ENCODE measurements at regions of chr16 and their contacts with region 1.

Region 1: DNA sequence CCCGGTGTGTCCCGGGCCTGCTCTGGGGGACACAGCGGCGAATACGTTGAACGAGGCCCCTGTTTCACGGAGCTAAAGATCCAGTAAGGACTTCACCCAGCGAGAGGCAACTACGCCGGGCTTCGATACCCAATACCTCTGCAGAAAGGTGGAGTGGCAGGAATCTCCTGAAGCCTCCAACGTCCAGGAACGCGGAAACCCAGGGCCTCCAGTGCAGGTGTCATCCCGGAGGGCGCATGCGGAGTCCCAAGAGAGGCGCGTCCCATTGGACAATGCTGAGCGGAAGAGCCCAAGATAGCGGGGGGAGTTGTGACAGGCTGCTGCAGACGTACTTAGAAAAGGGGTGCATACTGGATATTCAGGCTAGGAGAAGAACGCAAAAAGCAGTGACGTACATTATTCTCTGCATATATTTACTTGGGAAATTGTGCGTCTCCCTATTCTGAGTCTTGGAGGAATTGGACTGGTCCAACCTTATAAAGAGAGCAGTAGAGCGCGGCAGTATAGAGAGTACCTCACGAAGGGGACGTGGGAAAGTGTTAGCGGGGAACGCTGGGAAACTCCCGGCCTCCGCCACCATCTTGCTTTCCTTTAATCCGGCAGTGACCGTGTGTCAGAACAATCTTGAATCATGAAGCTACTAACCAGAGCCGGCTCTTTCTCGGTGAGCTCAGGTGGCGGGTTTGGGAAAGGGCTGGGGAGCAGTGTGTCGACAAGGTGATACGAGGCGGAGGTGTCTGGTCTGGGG is at the start of gene UQCRC2:
- DNase-seq: peak; percentile 95
- H3K4me3 ChIP-seq: peak within 1 kb of the TSS; percentile 74
- H3K27ac ChIP-seq: peak within 1 kb of the TSS; percentile 98
- H3K4me1 ChIP-seq: peaks cover 12% of the 10 kb centered on the region
- H3K27me3 ChIP-seq: no peaks in the 10 kb centered on the region
- CTCF ChIP-seq: no peak
- total RNA-seq, gene UQCRC2: 259 and 311 TPM in 2 replicates

Region 2: GRCh38 chr16:22070361-22071330 is 117.7 kb after region 1 on chr16:
- CTCF ChIA-PET with region 1: no interaction called
- POLR2A ChIA-PET with region 1: no interaction called
- intact Hi-C with region 1: loop called (anchors 5 kb)
- DNase-seq: no peak
- H3K4me3 ChIP-seq: no peak overlapping the region
- H3K27ac ChIP-seq: no peak overlapping the region
- H3K4me1 ChIP-seq: no peaks in the 10 kb centered on the region
- H3K27me3 ChIP-seq: no peaks in the 10 kb centered on the region
- CTCF ChIP-seq: no peak

Measured in A673 (cell line).